ENCODE measurements at regions of chr11 and their contacts with region 1.

Region 1: GRCh38 chr11:128472128-128473089 is 114.9 kb downstream of the ETS1 start:
- DNase-seq: no peak
- ATAC-seq: peak; percentile 26
- H3K4me3 Mint-ChIP-seq: peak overlapping the region; percentile 60
- H3K27ac Mint-ChIP-seq: peak overlapping the region; percentile 89
- H3K4me1 Mint-ChIP-seq: peaks cover 100% of the 10 kb centered on the region
- H3K27me3 Mint-ChIP-seq: no peaks in the 10 kb centered on the region
- CTCF ChIP-seq: no peak

Region 2: GRCh38 chr11:128323381-128323780 is 149.0 kb before region 1 on chr11:
- CTCF ChIA-PET with region 1: interaction called, 9 read pairs
- POLR2A ChIA-PET with region 1: interaction called, 11 read pairs
- intact Hi-C with region 1: no loop called
- DNase-seq: no peak
- ATAC-seq: peak; percentile 25
- H3K4me3 Mint-ChIP-seq: no peak overlapping the region
- H3K27ac Mint-ChIP-seq: peak overlapping the region; percentile 59
- H3K4me1 Mint-ChIP-seq: peaks cover 49% of the 10 kb centered on the region
- H3K27me3 Mint-ChIP-seq: no peaks in the 10 kb centered on the region
- CTCF ChIP-seq: no peak

Region 3: GRCh38 chr11:128453444-128454336 is 18.7 kb before region 1 on chr11:
- CTCF ChIA-PET with region 1: interaction called, 4 read pairs
- POLR2A ChIA-PET with region 1: interaction called, 14 read pairs
- intact Hi-C with region 1: loop called (anchors 2 kb)
- DNase-seq: no peak
- ATAC-seq: no peak
- H3K4me3 Mint-ChIP-seq: no peak overlapping the region
- H3K27ac Mint-ChIP-seq: peak overlapping the region; percentile 54
- H3K4me1 Mint-ChIP-seq: peaks cover 53% of the 10 kb centered on the region
- H3K27me3 Mint-ChIP-seq: no peaks in the 10 kb centered on the region
- CTCF ChIP-seq: no peak

Region 4: DNA sequence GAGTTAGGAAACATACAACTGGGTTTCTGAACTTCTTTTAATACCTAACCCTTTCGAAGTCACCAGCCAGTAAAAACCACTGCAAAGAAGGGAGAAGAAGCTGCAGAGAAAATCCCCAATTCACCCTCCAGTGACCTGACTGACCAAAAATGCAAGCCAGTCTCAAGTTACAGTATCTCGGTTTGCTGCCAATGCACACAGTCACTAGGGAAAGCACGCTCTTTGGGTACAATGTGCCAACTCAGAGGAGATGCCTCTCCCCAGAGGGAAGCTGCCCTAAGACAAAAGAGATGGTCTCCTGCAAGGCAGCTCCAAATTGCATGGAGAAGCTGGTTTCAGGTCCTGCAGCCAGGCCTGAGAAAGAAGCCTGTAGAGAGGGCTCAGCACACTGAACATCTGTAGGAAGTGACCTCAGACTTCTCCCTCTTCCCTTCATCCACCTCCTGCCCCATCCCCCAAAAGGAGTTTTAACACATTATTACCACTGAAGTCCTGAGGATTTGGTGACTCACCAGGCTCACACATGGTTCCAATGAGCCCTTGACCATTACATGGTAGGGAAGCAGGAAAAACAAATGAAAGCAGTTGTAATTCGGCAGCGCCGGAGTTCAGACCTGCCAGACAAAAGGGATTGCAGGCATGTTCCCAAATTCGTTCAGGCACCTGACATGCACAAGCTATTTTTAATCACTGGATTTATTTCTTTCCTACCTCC is 24.8 kb after region 1 on chr11:
- CTCF ChIA-PET with region 1: interaction called, 6 read pairs
- POLR2A ChIA-PET with region 1: interaction called, 38 read pairs
- intact Hi-C with region 1: loop called (anchors 1 kb)
- DNase-seq: peak; percentile 43
- ATAC-seq: peak; percentile 92
- H3K4me3 Mint-ChIP-seq: peak overlapping the region; percentile 78
- H3K27ac Mint-ChIP-seq: peak overlapping the region; percentile 93
- H3K4me1 Mint-ChIP-seq: peaks cover 98% of the 10 kb centered on the region
- H3K27me3 Mint-ChIP-seq: no peaks in the 10 kb centered on the region
- CTCF ChIP-seq: no peak

Region 5: DNA sequence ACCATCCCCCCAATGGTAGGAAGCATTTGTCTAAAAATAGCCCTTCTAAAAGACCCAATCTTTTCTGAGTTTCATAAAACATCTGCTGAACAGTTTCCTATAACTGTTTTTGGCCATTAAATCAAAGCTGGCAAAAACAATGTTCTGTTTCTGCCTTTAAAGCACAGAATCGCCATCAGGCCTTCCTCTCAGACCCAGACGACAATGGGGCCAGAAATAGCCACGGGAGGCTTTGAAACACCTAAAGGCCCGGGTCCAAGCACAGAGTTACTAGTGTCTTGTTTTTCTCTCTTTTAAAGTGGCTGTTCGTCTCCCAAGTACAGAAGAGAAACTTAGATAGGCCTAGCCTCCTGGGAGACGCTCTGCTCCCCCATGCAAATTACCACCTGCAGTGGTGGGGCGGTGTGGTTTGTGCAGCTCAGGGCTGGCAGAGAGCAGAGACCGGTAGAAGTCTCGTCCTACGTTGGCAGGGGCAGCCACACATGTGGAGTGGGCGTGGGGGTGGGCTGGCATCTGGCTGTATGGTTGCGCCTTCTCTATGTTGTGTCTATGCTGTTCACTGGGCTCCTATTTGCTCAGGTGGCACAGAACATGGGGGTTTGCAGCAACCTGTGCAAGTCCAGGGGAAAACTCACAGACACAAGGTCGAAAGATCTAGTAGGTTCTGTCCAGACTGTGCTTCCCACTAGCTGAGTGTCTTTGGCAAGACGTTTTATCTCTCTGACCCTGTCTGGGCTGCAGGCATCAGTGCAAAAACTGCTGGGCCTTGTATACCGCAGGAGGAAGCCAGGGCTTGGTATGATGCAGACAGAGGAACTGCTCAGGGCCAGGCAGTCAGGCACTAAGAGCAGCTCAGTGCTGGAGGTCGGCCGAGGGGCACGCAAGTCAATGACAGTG is 138.6 kb after region 1 on chr11:
- CTCF ChIA-PET with region 1: interaction called, 3 read pairs
- POLR2A ChIA-PET with region 1: interaction called, 15 read pairs
- intact Hi-C with region 1: loop called (anchors 1 kb)
- DNase-seq: peak; percentile 79
- ATAC-seq: peak; percentile 87
- H3K4me3 Mint-ChIP-seq: peak overlapping the region; percentile 79
- H3K27ac Mint-ChIP-seq: peak overlapping the region; percentile 94
- H3K4me1 Mint-ChIP-seq: peaks cover 93% of the 10 kb centered on the region
- H3K27me3 Mint-ChIP-seq: no peaks in the 10 kb centered on the region
- CTCF ChIP-seq: no peak

Region 6: DNA sequence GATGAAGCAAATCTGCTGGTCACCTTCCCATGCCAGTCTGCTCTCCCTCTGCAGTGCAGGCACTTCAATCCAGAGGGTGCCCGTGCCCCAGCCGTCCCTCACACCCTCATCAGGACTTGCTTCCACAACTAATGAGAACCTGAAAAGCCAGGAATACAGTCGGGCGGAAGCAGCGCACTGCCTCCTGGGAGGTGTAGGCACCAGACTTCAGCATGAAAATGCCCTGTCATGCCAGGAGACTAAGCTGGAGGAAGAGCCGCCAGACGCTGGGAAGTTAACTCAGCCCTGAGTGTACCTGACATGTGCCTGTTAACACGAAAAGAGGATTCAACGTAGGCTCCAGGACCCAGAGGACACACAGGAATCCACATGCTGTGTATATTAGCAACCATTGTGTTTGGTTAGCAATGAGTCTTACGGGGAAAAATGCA is 181.4 kb after region 1 on chr11:
- CTCF ChIA-PET with region 1: no interaction called
- POLR2A ChIA-PET with region 1: no interaction called
- intact Hi-C with region 1: no loop called
- DNase-seq: no peak
- ATAC-seq: no peak
- H3K4me3 Mint-ChIP-seq: peak overlapping the region; percentile 59
- H3K27ac Mint-ChIP-seq: no peak overlapping the region
- H3K4me1 Mint-ChIP-seq: peaks cover 12% of the 10 kb centered on the region
- H3K27me3 Mint-ChIP-seq: peaks cover 11% of the 10 kb centered on the region
- CTCF ChIP-seq: no peak

Region 7: GRCh38 chr11:128725630-128726319 is 253.4 kb after region 1 on chr11:
- CTCF ChIA-PET with region 1: no interaction called
- POLR2A ChIA-PET with region 1: interaction called, 3 read pairs
- intact Hi-C with region 1: loop called (anchors 1 kb)
- DNase-seq: peak; percentile 42
- ATAC-seq: peak; percentile 64
- H3K4me3 Mint-ChIP-seq: peak overlapping the region; percentile 83
- H3K27ac Mint-ChIP-seq: peak overlapping the region; percentile 98
- H3K4me1 Mint-ChIP-seq: peaks cover 98% of the 10 kb centered on the region
- H3K27me3 Mint-ChIP-seq: no peaks in the 10 kb centered on the region
- CTCF ChIP-seq: no peak

Measured in activated B cell treated with CpG ODN at 0.5 μM for 24 hours (primary cell).